Left ventricle myocardium inferior (tissue), 1 donor: ENCODE measurements at regions of chr1 and their contacts with region 1.

Region 1: GRCh38 chr1:225777583-225778336 is at the start of gene SRP9:
- DNase-seq: peak; percentile 99
- H3K4me3 ChIP-seq: peak within 1 kb of the TSS; percentile 75
- H3K27ac ChIP-seq: peak within 1 kb of the TSS; percentile 91
- H3K4me1 ChIP-seq: peaks cover 61% of the 10 kb centered on the region
- H3K27me3 ChIP-seq: no peaks in the 10 kb centered on the region
- CTCF ChIP-seq: peak; percentile 92
- total RNA-seq, gene SRP9: 205 TPM

Region 2: GRCh38 chr1:225554216-225554812 is 223.4 kb before region 1 on chr1:
- intact Hi-C with region 1: no loop called
- DNase-seq: no peak
- H3K4me3 ChIP-seq: no peak overlapping the region
- H3K27ac ChIP-seq: no peak overlapping the region
- H3K4me1 ChIP-seq: peaks cover 25% of the 10 kb centered on the region
- H3K27me3 ChIP-seq: no peaks in the 10 kb centered on the region
- CTCF ChIP-seq: peak; percentile 75

Region 3: DNA sequence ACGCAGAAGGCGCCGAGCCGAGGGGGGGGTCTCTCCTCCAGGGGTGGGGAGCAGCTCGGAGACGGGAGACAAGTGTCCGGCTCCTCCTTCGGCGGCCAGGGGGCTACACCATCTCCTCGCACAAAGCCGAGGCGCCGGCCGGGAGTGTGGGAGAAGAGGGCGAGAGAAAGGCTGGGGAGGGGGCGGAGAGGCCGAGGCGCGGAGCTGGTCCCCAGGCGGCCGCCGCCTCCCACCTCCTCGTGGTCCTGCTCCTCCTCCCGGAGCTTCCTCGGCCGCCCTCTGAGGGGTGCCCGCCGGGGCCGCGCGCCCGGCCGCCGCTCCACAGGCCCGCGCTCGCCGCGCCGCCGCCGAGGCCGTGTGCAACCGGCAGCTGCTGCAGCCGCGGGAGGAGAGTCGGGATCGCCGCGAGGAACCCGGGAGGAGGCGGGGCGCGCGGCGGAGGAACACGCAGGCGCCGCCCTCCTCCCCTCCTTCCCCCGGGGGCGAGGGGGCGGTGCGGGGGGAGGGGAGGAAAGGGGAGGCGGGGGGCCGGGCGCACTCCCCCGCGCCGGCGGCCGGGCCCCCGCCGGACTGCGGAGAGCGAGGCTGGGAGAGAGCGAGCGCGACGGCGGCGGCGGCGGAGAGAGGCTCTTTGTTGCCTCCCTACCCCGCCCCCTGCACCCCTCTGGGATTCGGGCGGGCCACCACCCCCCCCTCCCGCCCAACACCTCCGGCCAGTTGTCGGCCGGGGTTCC is 124.9 kb before region 1 on chr1 and contains the start of gene ENAH:
- intact Hi-C with region 1: loop called (anchors 10 kb)
- DNase-seq: peak; percentile 89
- H3K4me3 ChIP-seq: peak within 1 kb of the TSS; percentile 91
- H3K27ac ChIP-seq: peak within 1 kb of the TSS; percentile 99
- H3K4me1 ChIP-seq: peaks cover 64% of the 10 kb centered on the region
- H3K27me3 ChIP-seq: no peaks in the 10 kb centered on the region
- CTCF ChIP-seq: no peak
- total RNA-seq, gene ENAH: 78.6 TPM

Region 4: GRCh38 chr1:225809842-225810578 is 32.2 kb after region 1 on chr1 and contains the start of gene EPHX1:
- intact Hi-C with region 1: loop called (anchors 5 kb)
- DNase-seq: peak; percentile 94
- H3K4me3 ChIP-seq: peak within 1 kb of the TSS; percentile 90
- H3K27ac ChIP-seq: peak within 1 kb of the TSS; percentile 95
- H3K4me1 ChIP-seq: peaks cover 52% of the 10 kb centered on the region
- H3K27me3 ChIP-seq: no peaks in the 10 kb centered on the region
- CTCF ChIP-seq: peak; percentile 63
- total RNA-seq, gene EPHX1: 49.7 TPM

Region 5: DNA sequence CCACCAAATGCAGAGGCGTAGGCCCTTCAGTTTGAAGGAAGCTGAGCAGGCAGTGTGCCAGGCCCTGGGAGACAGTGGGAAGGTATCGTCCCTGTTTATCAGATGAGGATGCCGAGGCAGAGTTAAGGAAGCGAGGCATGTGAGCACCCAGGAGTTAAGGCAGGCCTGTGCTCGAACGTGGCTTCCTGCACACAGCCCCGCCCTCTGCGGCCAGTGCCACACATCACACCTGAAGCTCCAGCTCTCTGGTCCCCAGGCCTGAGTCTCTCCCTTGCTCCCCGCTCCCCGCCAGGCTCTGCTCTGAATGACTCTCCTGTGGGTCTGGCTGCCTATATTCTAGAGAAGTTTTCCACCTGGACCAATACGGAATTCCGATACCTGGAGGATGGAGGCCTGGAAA is 64.3 kb after region 1 on chr1:
- intact Hi-C with region 1: loop called (anchors 5 kb)
- DNase-seq: no peak
- H3K4me3 ChIP-seq: no peak overlapping the region
- H3K27ac ChIP-seq: no peak overlapping the region
- H3K4me1 ChIP-seq: peaks cover 18% of the 10 kb centered on the region
- H3K27me3 ChIP-seq: no peaks in the 10 kb centered on the region
- CTCF ChIP-seq: no peak